ENCODE measurements at regions of chr11 and their contacts with region 1.

Region 1: GRCh38 chr11:86749376-86749775 is 51.0 kb upstream of the PRSS23 start:
- DNase-seq: no peak
- H3K4me3 ChIP-seq: no peak overlapping the region
- CTCF ChIP-seq: no peak

Region 2: GRCh38 chr11:86483940-86484794 is 265.2 kb before region 1 on chr11:
- CTCF ChIA-PET with region 1: no interaction called
- POLR2A ChIA-PET with region 1: interaction called, 13 read pairs
- DNase-seq: peak; percentile 98
- H3K4me3 ChIP-seq: no peak overlapping the region
- CTCF ChIP-seq: no peak

Region 3: DNA sequence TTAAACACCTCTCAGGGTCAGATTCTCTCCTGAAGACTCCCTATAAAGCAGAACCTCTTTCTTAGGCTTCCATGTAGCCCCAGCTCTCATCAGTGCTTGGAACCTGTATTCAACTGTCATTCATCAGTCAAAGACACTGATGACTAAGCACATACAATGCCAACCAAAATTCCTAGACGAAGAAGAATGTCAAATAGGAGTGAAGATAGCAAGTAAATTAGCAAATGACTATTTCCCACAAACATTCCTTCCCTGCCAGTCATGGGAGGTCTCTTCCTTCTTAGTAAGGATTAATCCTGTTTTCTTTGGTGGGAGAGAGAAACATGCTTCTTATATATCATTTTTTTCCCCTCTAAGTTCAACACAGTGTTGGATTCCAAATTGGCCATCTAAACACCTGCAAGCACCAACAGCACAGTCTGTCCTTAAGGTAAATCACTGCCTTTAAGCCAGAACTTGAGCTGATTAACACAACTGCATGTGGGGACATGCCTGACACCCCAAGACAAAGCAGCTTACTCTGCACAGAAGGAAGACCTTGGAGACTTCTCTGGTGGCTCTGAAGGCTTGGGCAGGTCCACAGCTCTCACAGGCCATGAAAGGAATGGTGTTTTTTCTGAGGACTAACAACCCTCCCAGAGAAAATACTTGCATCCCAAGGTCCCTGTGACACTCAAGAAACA is 29.5 kb before region 1 on chr11:
- CTCF ChIA-PET with region 1: no interaction called
- POLR2A ChIA-PET with region 1: interaction called, 15 read pairs
- DNase-seq: no peak
- H3K4me3 ChIP-seq: no peak overlapping the region
- CTCF ChIP-seq: no peak

Region 4: GRCh38 chr11:86735462-86736302 is 13.7 kb before region 1 on chr11:
- CTCF ChIA-PET with region 1: interaction called, 3 read pairs
- POLR2A ChIA-PET with region 1: interaction called, 16 read pairs
- DNase-seq: no peak
- H3K4me3 ChIP-seq: no peak overlapping the region
- CTCF ChIP-seq: no peak

Region 5: DNA sequence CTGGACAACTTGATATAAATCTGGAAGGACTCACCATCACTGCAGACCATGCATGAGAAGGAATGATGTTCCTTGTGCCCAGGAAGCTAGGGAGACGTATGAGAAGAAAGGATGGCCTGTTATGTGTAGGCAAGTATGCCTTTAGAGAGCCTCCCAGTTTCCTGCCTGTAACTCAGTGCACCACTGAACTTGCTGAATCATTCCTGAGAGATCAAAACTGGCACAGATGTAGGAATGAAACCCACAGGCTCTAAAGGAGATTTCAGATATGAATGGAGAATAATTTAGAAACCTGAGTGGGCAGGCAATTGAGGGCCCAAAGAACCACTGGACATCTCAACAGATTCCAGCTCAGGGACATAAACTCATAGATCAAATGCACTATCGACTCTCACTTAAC is 12.6 kb after region 1 on chr11:
- CTCF ChIA-PET with region 1: interaction called, 12 read pairs
- POLR2A ChIA-PET with region 1: interaction called, 20 read pairs
- DNase-seq: no peak
- H3K4me3 ChIP-seq: no peak overlapping the region
- CTCF ChIP-seq: no peak

Region 6: GRCh38 chr11:86802601-86803051 is 53.2 kb after region 1 on chr11:
- CTCF ChIA-PET with region 1: interaction called, 4 read pairs
- POLR2A ChIA-PET with region 1: interaction called, 41 read pairs
- DNase-seq: no peak
- H3K4me3 ChIP-seq: peak overlapping the region; percentile 82
- CTCF ChIP-seq: peak; percentile 51

Region 7: GRCh38 chr11:86931548-86932258 is 182.3 kb after region 1 on chr11:
- CTCF ChIA-PET with region 1: no interaction called
- POLR2A ChIA-PET with region 1: no interaction called
- DNase-seq: no peak
- H3K4me3 ChIP-seq: no peak overlapping the region
- CTCF ChIP-seq: no peak